ENCODE measurements at regions of chr6 and their contacts with region 1.

Region 1: DNA sequence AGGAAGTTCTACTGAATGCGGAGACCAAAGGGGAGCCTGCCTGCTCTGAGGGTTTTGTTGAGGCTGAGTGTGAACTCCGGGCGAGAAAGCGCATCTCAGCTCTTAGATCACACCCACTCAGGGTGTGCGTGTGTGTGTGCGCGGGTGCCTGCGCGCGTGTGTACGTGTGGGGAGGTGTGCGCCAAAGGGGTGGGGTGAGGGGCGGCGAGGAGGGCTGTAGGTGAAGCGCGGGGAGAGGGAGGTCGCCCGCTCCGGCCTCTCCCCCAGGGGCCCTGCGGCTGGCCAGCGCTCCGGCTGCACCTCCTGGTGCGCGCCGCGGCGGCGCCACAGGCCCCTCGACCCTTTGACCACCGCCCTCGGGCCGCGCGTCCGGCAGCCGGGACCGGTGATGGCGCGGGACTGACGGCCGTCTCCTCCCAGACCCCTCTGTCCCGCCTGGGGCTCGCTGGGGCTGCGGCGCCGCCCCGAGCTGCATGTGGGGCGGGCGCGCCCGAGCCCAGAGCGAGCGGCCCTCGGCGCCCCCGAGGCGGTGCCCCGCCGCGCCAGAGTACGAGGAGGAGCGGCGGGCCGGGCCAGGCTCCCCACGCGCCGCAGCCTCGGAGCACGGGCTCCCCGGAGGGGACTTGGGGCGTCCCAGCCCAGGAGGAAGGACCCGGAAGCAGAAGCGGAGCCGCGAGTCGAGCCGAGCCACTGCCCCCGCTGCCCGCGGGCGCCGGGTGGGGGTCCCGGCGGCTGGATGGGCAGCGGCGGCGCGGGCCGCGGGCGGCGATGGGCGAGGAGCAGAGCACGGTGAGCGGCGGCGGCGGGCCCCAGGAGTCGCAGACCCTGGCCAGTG is at the start of gene RNF217:
- DNase-seq: peak in 9 of 10 donors; percentile 40 to 90 (median 53)

Region 2: DNA sequence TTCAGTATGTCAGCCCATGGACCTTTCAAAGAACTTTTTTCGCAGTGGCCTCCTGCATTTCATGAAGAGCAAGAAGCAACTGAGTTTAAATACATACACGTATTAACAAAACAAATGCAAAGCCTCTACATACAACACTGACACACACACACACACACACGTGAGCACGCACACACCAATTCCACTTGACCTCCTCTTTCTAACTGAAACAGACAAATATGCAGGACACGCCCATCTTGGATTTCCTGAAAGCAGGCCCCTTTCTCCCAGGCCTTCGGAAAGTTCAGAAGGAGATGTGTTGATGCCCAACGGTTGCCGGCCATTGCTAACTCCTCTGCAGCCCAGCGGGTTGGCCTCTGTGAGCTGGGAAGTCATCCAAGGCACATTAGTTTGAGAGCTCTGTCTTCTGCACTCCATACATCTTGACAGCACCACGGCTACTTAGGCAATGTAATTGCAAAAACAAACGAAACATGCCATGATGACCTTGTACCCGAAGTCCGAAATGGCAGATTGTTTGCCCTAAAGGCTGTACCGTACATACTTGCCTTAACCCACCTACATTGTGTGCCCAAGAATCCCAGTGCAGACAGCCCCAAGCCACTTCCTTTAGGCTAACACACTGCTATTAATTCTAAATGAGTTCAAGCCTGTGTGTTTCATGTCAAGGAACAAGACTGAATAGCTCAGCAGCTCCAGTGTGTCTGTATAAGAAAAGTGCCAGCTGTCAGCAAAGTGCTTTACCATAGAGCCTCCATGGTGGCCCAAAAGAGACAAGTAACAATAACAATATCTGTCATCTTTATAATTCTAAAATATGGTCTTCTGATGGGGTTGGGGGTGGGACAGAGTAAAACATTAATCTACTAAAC is 138.5 kb before region 1 on chr6:
- intact Hi-C with region 1: no loop called
- DNase-seq: peak in 1 of 10 donors; percentile 66

Region 3: DNA sequence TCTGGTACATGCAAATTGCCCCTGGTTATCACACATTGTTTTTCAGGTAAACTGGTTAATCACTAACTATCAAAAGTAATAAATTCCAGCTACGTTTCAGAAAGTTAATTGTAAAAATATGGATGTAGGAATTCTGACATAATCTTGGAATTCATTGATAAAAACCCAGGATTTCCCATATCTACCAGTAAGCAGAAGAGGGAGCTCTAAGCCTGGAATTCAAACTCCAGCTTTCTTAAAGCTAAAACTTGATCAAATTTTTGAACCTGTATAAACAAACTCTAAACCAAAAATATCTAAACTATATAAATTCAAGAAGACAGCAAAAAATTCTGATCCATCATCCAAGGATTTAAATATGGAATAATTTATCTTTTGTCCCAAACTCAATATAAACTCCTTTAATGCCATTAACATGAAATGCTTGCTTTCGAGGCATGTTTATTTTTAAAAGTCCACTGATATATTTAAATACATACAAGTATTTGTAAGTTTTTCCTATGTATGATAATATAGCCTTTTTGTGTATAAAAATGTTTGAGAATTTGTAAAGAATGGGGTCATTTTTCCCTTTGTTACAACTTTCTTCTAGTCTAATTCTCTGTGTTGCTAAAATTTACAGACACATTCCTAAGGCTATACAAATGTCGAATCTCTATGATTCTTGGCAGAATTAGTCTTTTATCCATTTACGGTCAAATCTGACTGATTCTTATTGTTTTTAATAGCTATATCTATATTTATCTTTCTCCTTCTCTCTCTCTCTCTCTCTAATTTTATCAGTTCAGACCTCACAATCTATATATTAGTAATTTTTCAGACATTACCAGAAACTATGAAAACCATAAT is 91.2 kb before region 1 on chr6:
- intact Hi-C with region 1: loop called (anchors 5 kb)
- DNase-seq: no peak

Region 4: GRCh38 chr6:125013938-125014660 is 52.1 kb after region 1 on chr6:
- intact Hi-C with region 1: loop called (anchors 10 kb)
- DNase-seq: no peak

Region 5: GRCh38 chr6:125099211-125100073 is 137.4 kb after region 1 on chr6:
- intact Hi-C with region 1: loop called (anchors 5 kb)
- DNase-seq: peak; percentile 40 to 97 (median 72)

Region 6: DNA sequence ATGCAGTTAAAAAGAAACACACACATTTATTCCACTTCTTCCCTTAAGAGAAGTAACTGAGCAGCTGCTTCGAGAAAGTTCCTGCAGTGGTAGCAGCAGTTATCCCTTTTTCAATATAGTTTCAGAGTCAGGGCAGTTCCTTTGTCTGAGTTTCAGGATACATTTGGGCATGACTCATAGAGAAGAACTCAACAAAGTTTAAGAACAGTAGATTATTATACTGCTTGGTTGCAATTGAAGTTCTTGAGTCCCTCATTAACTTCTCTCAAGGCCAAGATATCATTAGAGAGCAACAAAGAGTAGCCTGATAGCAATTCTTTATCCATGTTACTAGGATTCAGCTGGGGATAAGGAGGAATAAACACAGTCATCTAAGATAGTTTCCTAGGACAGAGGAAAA is 246.0 kb after region 1 on chr6:
- intact Hi-C with region 1: no loop called
- DNase-seq: no peak

Region 7: DNA sequence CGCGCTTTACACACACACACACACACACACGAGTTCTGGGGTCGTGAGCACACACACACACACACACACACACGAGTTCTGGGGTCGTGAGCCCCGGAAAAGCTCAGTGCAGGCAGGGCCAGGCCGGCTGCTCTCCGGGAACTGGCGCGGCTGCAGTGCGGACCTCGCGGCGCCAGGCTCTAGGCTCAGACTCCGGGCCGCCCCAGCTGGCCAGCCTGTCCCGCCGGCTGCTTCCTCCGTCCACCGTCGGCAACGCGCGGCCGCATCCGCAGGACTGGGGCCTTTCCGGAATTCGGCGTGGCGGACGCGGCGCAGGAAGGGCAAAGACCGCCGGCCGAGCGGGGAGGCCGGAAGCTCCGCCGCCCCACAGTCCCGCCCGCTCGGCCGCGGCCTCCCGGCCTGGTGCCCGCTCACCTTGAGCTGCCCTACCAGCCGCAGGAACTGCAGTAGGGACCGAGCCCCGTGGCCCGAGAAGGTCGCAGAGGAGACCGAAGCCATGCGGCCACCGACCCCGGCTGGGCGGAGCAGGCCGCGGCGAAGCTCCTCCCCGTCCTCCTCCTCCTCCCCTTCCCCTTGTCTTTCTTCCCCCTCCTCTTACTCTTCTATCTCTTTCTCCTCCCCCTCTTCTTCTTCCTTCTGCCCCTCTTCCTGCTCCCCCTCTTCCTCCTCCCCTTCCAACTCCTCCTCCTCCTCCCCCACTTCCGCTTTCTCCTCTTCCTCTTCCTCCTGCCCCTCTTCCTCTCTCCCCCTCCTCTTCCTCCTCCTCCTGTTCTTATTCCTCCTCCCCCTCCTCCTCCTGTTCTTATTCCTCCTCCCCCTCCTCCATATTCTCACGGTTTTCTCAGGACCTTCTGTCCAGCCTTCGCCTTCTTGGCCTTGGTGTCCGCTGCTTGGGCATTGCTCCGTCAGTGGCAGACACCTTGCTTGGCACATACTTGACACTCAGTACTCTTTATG is 339.7 kb after region 1 on chr6 and contains the start of gene HDDC2:
- intact Hi-C with region 1: loop called (anchors 10 kb)
- DNase-seq: peak; percentile 35 to 91 (median 53)